HepG2 (cell line): ENCODE measurements at regions of chr12 and their contacts with region 1.

Region 1: GRCh38 chr12:60684988-60685655 is 1089.3 kb downstream of the SLC16A7 start:
- DNase-seq: no peak
- ATAC-seq: peak; percentile 60; the same call in 2 of the 3 replicates
- H3K4me3 ChIP-seq: no peak overlapping the region
- H3K27ac ChIP-seq: no peak overlapping the region
- H3K4me1 ChIP-seq: no peaks in the 10 kb centered on the region
- H3K27me3 ChIP-seq: no peaks in the 10 kb centered on the region
- CTCF ChIP-seq: 0 out of 2 replicates have a peak, but pooled peaks have one; percentile 28
- EP300 ChIP-seq: no peak
- POLR2A ChIP-seq: no peak
- RAD21 ChIP-seq: no peak

Region 2: GRCh38 chr12:60616400-60616799 is 68.7 kb before region 1 on chr12:
- CTCF ChIA-PET with region 1: no interaction called
- POLR2A ChIA-PET with region 1: no interaction called
- in situ Hi-C with region 1: no loop called
- intact Hi-C with region 1: no loop called
- DNase-seq: no peak
- ATAC-seq: no peak
- H3K4me3 ChIP-seq: no peak overlapping the region
- H3K27ac ChIP-seq: no peak overlapping the region
- H3K4me1 ChIP-seq: no peaks in the 10 kb centered on the region
- H3K27me3 ChIP-seq: no peaks in the 10 kb centered on the region; a peak in 1 of 5 replicates
- CTCF ChIP-seq: no peak
- EP300 ChIP-seq: no peak
- POLR2A ChIP-seq: no peak
- RAD21 ChIP-seq: no peak

Region 3: GRCh38 chr12:60666895-60667294 is 18.2 kb before region 1 on chr12:
- CTCF ChIA-PET with region 1: no interaction called
- POLR2A ChIA-PET with region 1: no interaction called
- in situ Hi-C with region 1: no loop called
- intact Hi-C with region 1: no loop called
- DNase-seq: no peak
- ATAC-seq: no peak
- H3K4me3 ChIP-seq: no peak overlapping the region
- H3K27ac ChIP-seq: no peak overlapping the region
- H3K4me1 ChIP-seq: no peaks in the 10 kb centered on the region
- H3K27me3 ChIP-seq: no peaks in the 10 kb centered on the region
- CTCF ChIP-seq: no peak
- EP300 ChIP-seq: no peak
- POLR2A ChIP-seq: no peak
- RAD21 ChIP-seq: no peak

Region 4: GRCh38 chr12:61538951-61539350 is 853.8 kb after region 1 on chr12:
- CTCF ChIA-PET with region 1: no interaction called
- POLR2A ChIA-PET with region 1: no interaction called
- in situ Hi-C with region 1: no loop called
- intact Hi-C with region 1: loop called (anchors 5 kb)
- DNase-seq: no peak
- ATAC-seq: no peak
- H3K4me3 ChIP-seq: no peak overlapping the region
- H3K27ac ChIP-seq: no peak overlapping the region
- H3K4me1 ChIP-seq: no peaks in the 10 kb centered on the region
- H3K27me3 ChIP-seq: no peaks in the 10 kb centered on the region
- CTCF ChIP-seq: no peak
- EP300 ChIP-seq: no peak
- POLR2A ChIP-seq: no peak
- RAD21 ChIP-seq: no peak

Region 5: DNA sequence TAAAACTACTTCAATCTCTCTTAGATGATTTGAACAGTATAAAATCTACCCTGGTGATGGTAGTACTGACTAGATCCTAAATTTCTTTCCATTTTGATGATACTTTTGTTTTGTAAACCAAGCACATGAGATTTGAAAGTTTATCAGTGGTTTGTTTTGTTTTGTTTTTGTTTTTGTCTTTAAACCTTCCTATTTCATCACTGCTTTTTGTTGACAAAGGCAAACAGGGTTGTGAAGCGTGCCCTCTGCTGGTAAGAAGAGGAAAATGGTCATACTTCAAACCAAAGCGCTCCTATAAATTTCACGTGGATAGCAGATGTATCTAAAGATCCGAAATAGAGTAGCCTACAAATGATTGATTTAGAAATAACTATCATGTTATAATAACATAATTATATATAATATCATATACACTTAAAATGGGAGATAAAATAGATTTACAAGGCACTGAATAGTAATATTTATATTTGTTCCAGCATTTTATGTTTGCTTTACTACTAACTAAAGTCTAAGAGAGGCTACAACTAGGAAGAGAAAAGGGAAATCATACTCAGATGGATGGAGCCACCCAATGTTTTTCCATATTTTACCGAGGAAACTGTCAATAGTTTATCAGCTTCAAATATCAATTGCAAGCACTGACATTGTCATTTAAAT is 1321.1 kb after region 1 on chr12:
- CTCF ChIA-PET with region 1: no interaction called
- POLR2A ChIA-PET with region 1: no interaction called
- in situ Hi-C with region 1: no loop called
- intact Hi-C with region 1: loop called (anchors 5 kb)
- DNase-seq: peak; percentile 34
- ATAC-seq: no peak
- H3K4me3 ChIP-seq: no peak overlapping the region
- H3K27ac ChIP-seq: no peak overlapping the region
- H3K4me1 ChIP-seq: no peaks in the 10 kb centered on the region
- H3K27me3 ChIP-seq: no peaks in the 10 kb centered on the region
- CTCF ChIP-seq: peak; percentile 63
- EP300 ChIP-seq: no peak
- POLR2A ChIP-seq: no peak
- RAD21 ChIP-seq: no peak

Region 6: GRCh38 chr12:62192180-62192902 is 1507.2 kb after region 1 on chr12:
- CTCF ChIA-PET with region 1: no interaction called
- POLR2A ChIA-PET with region 1: no interaction called
- in situ Hi-C with region 1: loop called (anchors 10 kb)
- intact Hi-C with region 1: no loop called
- DNase-seq: peak; percentile 71
- ATAC-seq: peak; percentile 98
- H3K4me3 ChIP-seq: peak overlapping the region in 1 of 3 experiments; percentile 25; a peak in 1 of 6 replicates
- H3K27ac ChIP-seq: no peak overlapping the region
- H3K4me1 ChIP-seq: peaks cover 22% of the 10 kb centered on the region
- H3K27me3 ChIP-seq: peaks cover 1 to 22% of the 10 kb centered on the region in 2 experiments; a peak in 3 of 5 replicates
- CTCF ChIP-seq: peak; percentile 83
- EP300 ChIP-seq: no peak
- POLR2A ChIP-seq: no peak
- RAD21 ChIP-seq: peak; percentile 70